HEK293T (cell line): ENCODE measurements at regions of chr1 and their contacts with region 1.

Region 1: GRCh38 chr1:12124693-12125421 is 41.9 kb upstream of the TNFRSF1B start:
- DNase-seq: peak; percentile 74

Region 2: GRCh38 chr1:11934302-11935056 is 190.4 kb before region 1 on chr1 and contains the start of gene PLOD1:
- CTCF ChIA-PET with region 1: no interaction called
- POLR2A ChIA-PET with region 1: no interaction called
- DNase-seq: peak; percentile 83

Region 3: DNA sequence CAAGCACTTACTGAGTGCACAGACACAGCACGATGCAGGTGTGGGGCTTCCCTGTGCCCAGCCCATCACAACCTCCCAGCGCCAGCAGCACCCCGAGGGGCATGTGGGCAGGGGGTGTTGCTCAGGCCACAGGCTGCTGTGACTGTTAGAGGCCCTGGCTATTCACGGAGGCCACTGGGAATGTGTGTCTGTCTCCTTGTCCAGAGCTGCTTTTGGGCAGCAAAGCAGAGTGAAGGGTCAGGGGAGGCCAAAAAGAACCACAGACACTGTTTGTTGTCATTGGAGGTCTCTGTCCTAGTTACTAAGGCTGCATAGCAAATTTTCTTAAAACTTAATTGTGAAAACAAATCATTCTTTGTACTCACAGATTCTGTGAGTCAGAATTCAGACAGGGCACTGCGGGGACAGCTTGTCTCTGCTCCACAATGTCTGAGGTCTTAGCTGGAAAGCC is 12.1 kb before region 1 on chr1:
- CTCF ChIA-PET with region 1: interaction called, 15 read pairs
- POLR2A ChIA-PET with region 1: no interaction called
- DNase-seq: no peak

Region 4: DNA sequence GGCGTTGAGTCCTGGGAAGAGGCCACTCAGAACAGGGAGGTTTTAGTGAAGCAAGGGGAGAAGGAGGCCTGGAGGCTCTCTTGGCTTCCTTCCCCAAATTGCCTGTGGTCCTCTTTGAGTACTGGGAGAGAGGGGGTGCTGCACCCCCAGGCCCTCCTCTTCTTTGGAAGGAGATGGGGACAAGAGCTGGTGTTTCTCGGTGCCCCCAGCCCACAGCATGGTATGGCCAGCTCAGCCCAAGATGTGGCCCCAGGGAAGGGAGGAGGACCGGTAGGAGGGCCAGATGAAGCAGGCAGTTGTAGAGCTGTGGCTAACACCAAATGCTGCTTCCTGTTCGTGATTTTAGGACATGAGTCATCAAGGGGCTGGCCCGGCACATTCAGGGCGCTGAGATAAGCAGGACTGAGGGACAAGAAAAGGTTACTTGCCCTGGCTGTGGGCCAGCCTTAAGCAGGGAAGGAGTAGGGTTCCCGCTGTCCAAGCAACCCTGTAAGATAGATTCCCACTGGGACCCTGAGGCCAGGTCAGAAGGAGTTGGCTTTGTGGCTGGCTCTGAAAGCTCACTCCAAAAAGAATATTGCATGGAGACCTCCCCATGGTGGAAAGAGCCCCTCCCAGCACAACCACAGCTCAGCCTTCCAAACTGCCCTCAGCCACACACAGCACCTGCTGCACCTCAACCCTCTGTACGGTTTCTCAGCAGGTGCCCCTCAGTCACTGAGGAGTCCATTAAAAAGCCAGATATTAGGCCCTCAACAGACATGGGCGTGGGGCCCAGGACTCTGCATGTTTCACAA is 37.0 kb after region 1 on chr1:
- CTCF ChIA-PET with region 1: interaction called, 10 read pairs
- POLR2A ChIA-PET with region 1: no interaction called
- DNase-seq: peak; percentile 49

Region 5: GRCh38 chr1:12201352-12202189 is 76.7 kb after region 1 on chr1:
- CTCF ChIA-PET with region 1: interaction called, 72 read pairs
- POLR2A ChIA-PET with region 1: no interaction called
- DNase-seq: no peak

Region 6: GRCh38 chr1:12215118-12215961 is 90.5 kb after region 1 on chr1:
- CTCF ChIA-PET with region 1: interaction called, 72 read pairs
- POLR2A ChIA-PET with region 1: no interaction called
- DNase-seq: no peak